PC-9 (cell line): ENCODE measurements at regions of chr2 and their contacts with region 1.

Region 1: GRCh38 chr2:178112202-178113152 is at the start of gene RBM45:
- DNase-seq: peak; percentile 92 to 96
- H3K4me3 ChIP-seq: peak within 1 kb of the TSS; percentile 77
- H3K27ac ChIP-seq: no peak within 1 kb of the TSS; the same call in 1 of the 2 replicates
- H3K4me1 ChIP-seq: peaks cover 15% of the 10 kb centered on the region
- H3K27me3 ChIP-seq: no peaks in the 10 kb centered on the region
- CTCF ChIP-seq: peak; percentile 100
- total RNA-seq, gene RBM45: 8.7 and 12.6 TPM in 2 replicates

Region 2: DNA sequence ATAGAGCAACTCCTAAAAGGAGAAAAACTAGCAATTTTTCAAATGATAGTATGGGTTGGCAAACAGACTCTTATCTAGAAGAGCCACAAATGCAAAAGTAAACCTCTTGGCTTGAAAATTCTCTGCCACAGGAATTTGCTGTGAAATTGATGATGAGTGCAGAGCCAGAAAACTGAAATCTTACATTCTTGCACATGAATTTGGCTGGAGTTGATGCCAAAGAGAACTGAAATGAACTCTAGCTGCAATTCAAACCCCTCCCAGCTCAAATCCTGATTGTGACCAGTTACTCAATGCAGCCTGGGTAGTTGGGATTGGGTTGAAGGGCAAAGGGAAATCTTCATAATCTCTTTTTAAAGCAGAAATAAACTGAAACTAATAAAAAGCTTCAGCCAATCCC is 306.5 kb before region 1 on chr2:
- CTCF ChIA-PET with region 1: no interaction called
- POLR2A ChIA-PET with region 1: no interaction called
- intact Hi-C with region 1: loop called (anchors 10 kb)
- DNase-seq: no peak
- H3K4me3 ChIP-seq: no peak overlapping the region
- H3K27ac ChIP-seq: no peak overlapping the region
- H3K4me1 ChIP-seq: no peaks in the 10 kb centered on the region
- H3K27me3 ChIP-seq: no peaks in the 10 kb centered on the region
- CTCF ChIP-seq: no peak

Region 3: GRCh38 chr2:178072383-178073301 is 39.8 kb before region 1 on chr2 and contains the start of gene PDE11A:
- CTCF ChIA-PET with region 1: no interaction called
- POLR2A ChIA-PET with region 1: no interaction called
- intact Hi-C with region 1: loop called (anchors 2 kb)
- DNase-seq: peak; percentile 85 to 94
- H3K4me3 ChIP-seq: peak within 1 kb of the TSS; percentile 64
- H3K27ac ChIP-seq: no peak within 1 kb of the TSS
- H3K4me1 ChIP-seq: peaks cover 27% of the 10 kb centered on the region
- H3K27me3 ChIP-seq: no peaks in the 10 kb centered on the region
- CTCF ChIP-seq: no peak
- total RNA-seq, gene PDE11A: 1.1 and 1.4 TPM in 2 replicates

Region 4: DNA sequence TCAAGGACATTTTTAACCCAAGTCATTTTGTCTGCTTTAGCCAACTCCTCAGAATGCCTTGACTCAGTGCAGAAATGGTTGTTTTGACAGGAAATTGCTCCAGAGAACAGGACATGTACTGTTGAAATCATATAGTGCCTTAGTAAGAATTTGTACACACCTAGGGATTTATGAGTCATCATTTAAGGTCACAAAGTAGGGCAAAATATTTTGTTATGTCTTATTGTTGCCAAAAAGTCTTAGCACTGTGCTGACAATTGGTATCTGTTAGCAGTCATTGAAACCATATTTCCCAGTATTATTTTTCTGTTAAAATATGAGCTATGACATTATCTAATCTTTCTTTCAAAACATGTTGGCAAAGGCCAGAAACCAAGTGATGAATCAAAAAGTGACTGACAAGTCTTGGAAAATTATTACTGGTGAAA is 186.3 kb after region 1 on chr2:
- CTCF ChIA-PET with region 1: no interaction called
- POLR2A ChIA-PET with region 1: no interaction called
- intact Hi-C with region 1: loop called (anchors 5 kb)
- DNase-seq: peak; percentile 20 to 74
- H3K4me3 ChIP-seq: no peak overlapping the region
- H3K27ac ChIP-seq: peak overlapping the region; percentile 28
- H3K4me1 ChIP-seq: peaks cover 25% of the 10 kb centered on the region; the same call in 1 of the 2 replicates
- H3K27me3 ChIP-seq: no peaks in the 10 kb centered on the region
- CTCF ChIP-seq: no peak

Region 5: DNA sequence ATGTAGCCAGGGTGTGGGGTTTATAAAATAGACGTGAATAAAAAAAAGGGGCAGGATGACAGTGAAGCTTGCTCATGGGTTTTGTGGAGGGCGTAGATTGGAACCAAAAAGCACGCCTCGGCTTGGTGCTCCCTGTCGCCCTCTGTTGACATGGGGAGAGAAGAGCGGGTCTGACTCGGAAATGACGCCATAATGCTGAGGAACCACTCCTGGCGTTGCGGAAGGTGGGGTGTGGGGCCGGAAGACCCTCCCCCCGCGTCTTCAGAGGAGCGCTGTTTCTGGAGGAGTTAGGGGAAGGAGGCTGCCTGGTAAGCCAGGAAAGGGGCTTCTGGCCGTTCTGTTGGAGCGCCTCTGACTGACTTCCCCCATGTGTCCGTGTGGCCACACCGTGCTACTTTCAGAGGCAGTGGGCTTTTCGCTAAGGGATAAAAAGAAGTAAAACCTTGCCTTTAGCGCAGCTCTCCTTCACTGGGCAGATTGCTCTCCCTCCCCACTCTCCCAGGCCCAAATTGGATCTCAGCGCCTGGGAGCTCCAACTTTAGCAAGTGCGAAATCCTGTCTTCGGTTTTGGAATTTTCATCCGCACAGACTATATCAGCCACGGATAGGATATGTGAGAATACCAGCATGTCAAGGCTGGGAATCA is 410.6 kb after region 1 on chr2:
- CTCF ChIA-PET with region 1: no interaction called
- POLR2A ChIA-PET with region 1: no interaction called
- intact Hi-C with region 1: loop called (anchors 5 kb)
- DNase-seq: peak; percentile 85 to 92
- H3K4me3 ChIP-seq: peak overlapping the region; percentile 78
- H3K27ac ChIP-seq: peak overlapping the region; percentile 30
- H3K4me1 ChIP-seq: peaks cover 10% of the 10 kb centered on the region
- H3K27me3 ChIP-seq: no peaks in the 10 kb centered on the region
- CTCF ChIP-seq: peak; percentile 97

Region 6: DNA sequence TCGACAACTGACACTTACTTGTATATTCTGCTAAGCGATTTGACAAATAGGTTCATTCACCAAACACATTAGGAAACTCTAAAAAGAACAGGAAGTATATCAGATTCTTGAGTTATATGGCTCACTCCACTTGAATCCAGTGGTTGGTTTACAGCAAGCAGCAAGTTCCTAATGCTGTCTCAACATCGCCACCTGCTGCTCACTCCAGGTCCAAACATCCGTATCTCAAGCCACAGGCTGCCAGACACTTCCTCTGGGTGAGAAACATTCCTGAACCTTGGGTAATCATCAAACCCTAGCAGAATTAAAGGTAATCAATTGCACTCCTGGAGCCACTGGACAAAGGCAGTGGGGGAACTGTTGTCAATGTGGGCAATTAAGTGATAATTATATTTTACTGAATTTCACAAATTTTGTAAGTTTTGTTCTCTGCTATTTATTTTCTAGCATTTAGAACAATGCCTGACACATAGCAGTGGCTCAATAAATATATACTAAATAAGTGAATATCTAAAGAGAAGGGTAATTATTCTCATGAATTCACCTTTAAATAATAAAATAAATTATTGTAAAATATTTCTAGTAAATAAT is 801.9 kb after region 1 on chr2:
- CTCF ChIA-PET with region 1: no interaction called
- POLR2A ChIA-PET with region 1: no interaction called
- intact Hi-C with region 1: loop called (anchors 5 kb)
- DNase-seq: peak; percentile 83 to 84
- H3K4me3 ChIP-seq: no peak overlapping the region
- H3K27ac ChIP-seq: no peak overlapping the region
- H3K4me1 ChIP-seq: peaks cover 30% of the 10 kb centered on the region
- H3K27me3 ChIP-seq: no peaks in the 10 kb centered on the region
- CTCF ChIP-seq: peak; percentile 99

Region 7: GRCh38 chr2:178962805-178963433 is 850.4 kb after region 1 on chr2:
- CTCF ChIA-PET with region 1: no interaction called
- POLR2A ChIA-PET with region 1: no interaction called
- intact Hi-C with region 1: no loop called
- DNase-seq: peak in 1 of 2 experiments; percentile 30
- H3K4me3 ChIP-seq: no peak overlapping the region
- H3K27ac ChIP-seq: no peak overlapping the region
- H3K4me1 ChIP-seq: no peaks in the 10 kb centered on the region
- H3K27me3 ChIP-seq: no peaks in the 10 kb centered on the region
- CTCF ChIP-seq: no peak